Mammary epithelial cell (primary cell): ENCODE measurements at regions of chr14 and their contacts with region 1.

Region 1: DNA sequence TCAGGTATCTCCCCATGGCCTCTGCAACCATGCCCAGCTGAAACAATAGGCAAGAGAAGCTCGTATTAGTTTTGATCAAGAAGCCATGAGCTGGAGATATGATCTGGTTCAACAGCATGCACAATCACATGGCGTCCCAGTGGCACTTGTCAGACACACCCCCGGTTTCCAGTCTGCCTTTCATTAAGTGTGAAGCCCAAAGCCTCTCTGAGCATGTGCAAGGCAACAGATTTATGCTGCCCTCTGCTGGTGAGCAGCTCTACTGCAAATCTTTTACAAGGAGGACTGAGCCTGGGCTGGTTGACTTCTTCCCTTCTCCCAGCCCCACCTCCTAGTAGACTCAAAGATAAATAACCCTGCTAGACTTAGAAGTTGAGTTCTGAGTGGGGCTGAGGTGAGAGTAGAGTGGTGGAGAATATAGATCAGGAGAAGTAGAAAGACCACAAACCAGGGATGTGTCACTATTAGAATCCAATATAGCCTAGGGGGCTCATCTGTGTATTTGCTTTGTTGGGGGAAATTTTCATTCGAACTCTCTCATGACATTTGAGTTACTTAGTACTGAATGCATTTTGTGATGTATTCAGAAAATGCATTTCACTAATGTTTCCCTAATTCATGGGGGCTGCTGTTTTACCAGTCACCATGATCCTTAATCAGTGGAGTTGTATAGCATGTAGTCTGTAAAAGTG is 53.7 kb upstream of the MBIP start:
- DNase-seq: peak; percentile 66
- H3K4me3 ChIP-seq: no peak overlapping the region
- H3K27ac ChIP-seq: no peak overlapping the region
- H3K4me1 ChIP-seq: no peaks in the 10 kb centered on the region
- H3K27me3 ChIP-seq: no peaks in the 10 kb centered on the region
- CTCF ChIP-seq: peak; percentile 89 to 95

Region 2: DNA sequence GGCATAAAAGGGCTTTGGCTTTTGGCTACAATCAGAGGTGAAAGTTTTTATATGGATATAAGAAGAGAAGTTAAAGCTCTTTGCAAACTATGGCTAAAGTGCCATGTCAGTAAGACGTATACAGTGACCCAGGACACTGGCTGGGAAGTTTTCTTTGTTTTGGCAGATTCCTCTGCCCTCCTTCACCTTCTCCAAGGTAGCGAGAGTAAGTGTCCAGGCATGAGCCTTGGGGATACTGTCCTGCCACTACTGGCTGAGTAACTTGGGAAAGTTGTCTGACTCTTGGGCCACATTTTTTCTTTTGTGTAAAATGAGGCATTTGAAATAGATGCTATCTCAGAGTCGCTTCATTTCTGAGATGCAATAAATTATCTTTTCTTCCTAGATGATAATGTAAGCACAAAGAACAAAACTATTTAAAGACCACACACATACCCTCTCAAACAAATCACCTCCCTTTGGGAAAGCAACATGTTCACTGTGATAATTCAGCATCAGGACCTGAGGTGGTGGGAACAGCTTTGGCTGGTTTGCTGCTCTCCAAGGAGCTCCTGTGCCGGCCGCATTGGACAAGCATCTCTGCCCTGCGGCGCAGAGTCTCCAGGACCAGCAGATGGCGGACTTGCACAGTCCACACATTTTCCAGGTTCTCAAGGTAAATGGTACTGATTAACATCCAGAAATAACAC is 304.0 kb before region 1 on chr14:
- CTCF ChIA-PET with region 1: interaction called, 5 read pairs
- dilution Hi-C with region 1: no loop called
- in situ Hi-C with region 1: loop called in 1 of 2 experiments (anchors 10 kb)
- intact Hi-C with region 1: loop called (anchors 1 kb)
- DNase-seq: peak; percentile 61
- H3K4me3 ChIP-seq: no peak overlapping the region
- H3K27ac ChIP-seq: peak overlapping the region; percentile 38
- H3K4me1 ChIP-seq: peaks cover 31% of the 10 kb centered on the region
- H3K27me3 ChIP-seq: no peaks in the 10 kb centered on the region
- CTCF ChIP-seq: peak; percentile 91 to 93

Region 3: GRCh38 chr14:36105401-36105800 is 268.7 kb before region 1 on chr14:
- CTCF ChIA-PET with region 1: interaction called, 4 read pairs
- dilution Hi-C with region 1: no loop called
- in situ Hi-C with region 1: no loop called
- intact Hi-C with region 1: loop called (anchors 2 kb)
- DNase-seq: no peak
- H3K4me3 ChIP-seq: no peak overlapping the region
- H3K27ac ChIP-seq: no peak overlapping the region
- H3K4me1 ChIP-seq: no peaks in the 10 kb centered on the region
- H3K27me3 ChIP-seq: peaks cover 6% of the 10 kb centered on the region
- CTCF ChIP-seq: peak in 1 of 2 donors; percentile 41

Region 4: GRCh38 chr14:36238666-36239363 is 135.3 kb before region 1 on chr14:
- CTCF ChIA-PET with region 1: no interaction called
- dilution Hi-C with region 1: no loop called
- in situ Hi-C with region 1: no loop called
- intact Hi-C with region 1: loop called (anchors 1 kb)
- DNase-seq: peak; percentile 96
- H3K4me3 ChIP-seq: no peak overlapping the region
- H3K27ac ChIP-seq: peak overlapping the region; percentile 75
- H3K4me1 ChIP-seq: peaks cover 17% of the 10 kb centered on the region
- H3K27me3 ChIP-seq: no peaks in the 10 kb centered on the region
- CTCF ChIP-seq: no peak

Region 5: GRCh38 chr14:36339816-36340215 is 34.3 kb before region 1 on chr14:
- CTCF ChIA-PET with region 1: no interaction called
- dilution Hi-C with region 1: no loop called
- in situ Hi-C with region 1: no loop called
- intact Hi-C with region 1: no loop called
- DNase-seq: no peak
- H3K4me3 ChIP-seq: no peak overlapping the region
- H3K27ac ChIP-seq: no peak overlapping the region
- H3K4me1 ChIP-seq: no peaks in the 10 kb centered on the region
- H3K27me3 ChIP-seq: peaks cover 3% of the 10 kb centered on the region
- CTCF ChIP-seq: no peak